ENCODE measurements at regions of chr9 and their contacts with region 1.

Region 1: GRCh38 chr9:22008736-22009562 is at the start of gene CDKN2B:
- DNase-seq: peak; percentile 66
- H3K4me3 Mint-ChIP-seq: peak within 1 kb of the TSS; percentile 84
- H3K27ac Mint-ChIP-seq: no peak within 1 kb of the TSS
- H3K4me1 Mint-ChIP-seq: peaks cover 27% of the 10 kb centered on the region
- H3K27me3 Mint-ChIP-seq: peaks cover 69% of the 10 kb centered on the region
- total RNA-seq, gene CDKN2B: 0.62 and 0.69 TPM in 2 replicates

Region 2: GRCh38 chr9:21812946-21813568 is 195.9 kb before region 1 on chr9:
- intact Hi-C with region 1: loop called (anchors 1 kb)
- DNase-seq: peak; percentile 49
- H3K4me3 Mint-ChIP-seq: no peak overlapping the region
- H3K27ac Mint-ChIP-seq: no peak overlapping the region
- H3K4me1 Mint-ChIP-seq: peaks cover 39% of the 10 kb centered on the region
- H3K27me3 Mint-ChIP-seq: no peaks in the 10 kb centered on the region

Region 3: DNA sequence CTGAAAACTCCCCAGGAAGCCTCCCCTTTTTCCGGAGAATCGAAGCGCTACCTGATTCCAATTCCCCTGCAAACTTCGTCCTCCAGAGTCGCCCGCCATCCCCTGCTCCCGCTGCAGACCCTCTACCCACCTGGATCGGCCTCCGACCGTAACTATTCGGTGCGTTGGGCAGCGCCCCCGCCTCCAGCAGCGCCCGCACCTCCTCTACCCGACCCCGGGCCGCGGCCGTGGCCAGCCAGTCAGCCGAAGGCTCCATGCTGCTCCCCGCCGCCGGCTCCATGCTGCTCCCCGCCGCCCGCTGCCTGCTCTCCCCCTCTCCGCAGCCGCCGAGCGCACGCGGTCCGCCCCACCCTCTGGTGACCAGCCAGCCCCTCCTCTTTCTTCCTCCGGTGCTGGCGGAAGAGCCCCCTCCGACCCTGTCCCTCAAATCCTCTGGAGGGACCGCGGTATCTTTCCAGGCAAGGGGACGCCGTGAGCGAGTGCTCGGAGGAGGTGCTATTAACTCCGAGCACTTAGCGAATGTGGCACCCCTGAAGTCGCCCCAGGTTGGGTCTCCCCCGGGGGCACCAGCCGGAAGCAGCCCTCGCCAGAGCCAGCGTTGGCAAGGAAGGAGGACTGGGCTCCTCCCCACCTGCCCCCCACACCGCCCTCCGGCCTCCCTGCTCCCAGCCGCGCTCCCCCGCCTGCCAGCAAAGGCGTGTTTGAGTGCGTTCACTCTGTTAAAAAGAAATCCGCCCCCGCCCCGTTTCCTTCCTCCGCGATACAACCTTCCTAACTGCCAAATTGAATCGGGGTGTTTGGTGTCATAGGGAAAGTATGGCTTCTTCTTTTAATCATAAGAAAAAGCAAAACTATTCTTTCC is 34.2 kb before region 1 on chr9:
- intact Hi-C with region 1: loop called (anchors 2 kb)
- DNase-seq: no peak
- H3K4me3 Mint-ChIP-seq: peak overlapping the region; percentile 83
- H3K27ac Mint-ChIP-seq: peak overlapping the region; percentile 50
- H3K4me1 Mint-ChIP-seq: peaks cover 22% of the 10 kb centered on the region
- H3K27me3 Mint-ChIP-seq: peaks cover 87% of the 10 kb centered on the region

Region 4: DNA sequence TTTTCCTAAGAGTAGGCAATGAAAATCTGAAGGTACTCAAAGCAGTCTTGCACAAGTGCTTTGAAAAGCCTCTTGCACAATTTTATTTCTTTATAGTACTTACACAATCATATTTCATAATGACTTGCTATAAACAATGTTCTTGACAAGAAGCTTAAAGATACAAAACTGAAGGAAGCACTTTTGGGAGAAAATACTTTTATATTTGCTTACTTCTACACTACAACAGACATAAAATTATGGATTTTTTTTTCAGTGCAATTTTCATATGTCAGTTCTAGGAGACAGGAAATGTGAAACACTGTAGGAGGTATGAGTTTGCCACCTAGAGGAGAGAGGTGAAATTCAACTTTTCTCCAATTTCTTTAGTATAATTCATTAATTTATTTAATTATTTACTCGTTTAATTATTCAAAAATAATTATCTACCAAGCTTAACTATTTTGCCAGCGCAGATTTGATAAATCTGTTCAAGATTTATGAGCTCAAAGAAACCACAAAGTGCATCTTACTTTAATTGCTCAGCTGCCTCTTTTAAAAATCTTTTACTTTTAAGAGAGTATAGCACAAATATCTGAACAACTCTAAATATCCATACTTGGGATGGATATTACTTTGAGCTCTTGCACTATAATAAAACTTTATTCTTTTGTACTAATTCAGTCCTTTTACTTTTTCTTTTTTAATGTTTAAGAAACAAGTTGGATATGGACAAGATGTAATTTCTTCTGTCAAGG is 29.2 kb after region 1 on chr9:
- intact Hi-C with region 1: loop called (anchors 2 kb)
- DNase-seq: no peak
- H3K4me3 Mint-ChIP-seq: no peak overlapping the region
- H3K27ac Mint-ChIP-seq: no peak overlapping the region
- H3K4me1 Mint-ChIP-seq: peaks cover 46% of the 10 kb centered on the region
- H3K27me3 Mint-ChIP-seq: peaks cover 26% of the 10 kb centered on the region

Region 5: GRCh38 chr9:22119537-22120158 is 110.7 kb after region 1 on chr9:
- intact Hi-C with region 1: loop called (anchors 1 kb)
- DNase-seq: no peak
- H3K4me3 Mint-ChIP-seq: no peak overlapping the region
- H3K27ac Mint-ChIP-seq: no peak overlapping the region
- H3K4me1 Mint-ChIP-seq: peaks cover 16% of the 10 kb centered on the region
- H3K27me3 Mint-ChIP-seq: peaks cover 68% of the 10 kb centered on the region